ENCODE measurements at regions of chr13 and their contacts with region 1.

Region 1: DNA sequence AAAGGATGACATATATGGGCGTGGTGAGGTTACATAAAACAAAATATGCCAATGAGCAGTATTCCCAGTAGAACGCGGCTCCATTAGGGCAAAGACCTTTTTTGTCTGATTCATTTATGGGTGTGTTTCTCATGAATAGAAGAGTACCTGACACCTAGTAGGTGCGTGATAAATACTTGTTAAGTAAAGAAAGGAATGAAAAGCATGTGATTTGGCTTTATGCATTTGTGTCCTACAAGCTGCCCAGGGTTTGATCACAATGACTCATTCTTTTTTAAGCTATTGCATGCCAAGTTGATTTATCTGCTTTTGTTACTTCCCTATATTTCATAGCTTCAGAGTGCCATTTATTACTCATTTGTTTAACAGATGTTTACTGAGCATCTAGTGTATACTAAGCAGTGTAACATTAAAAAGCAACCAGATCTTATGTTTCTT is 19.1 kb upstream of the KCTD4 start:
- DNase-seq: peak; percentile 90
- H3K4me3 Mint-ChIP-seq: peak overlapping the region; percentile 28
- H3K27ac Mint-ChIP-seq: peak overlapping the region; percentile 81
- H3K4me1 Mint-ChIP-seq: peaks cover 48% of the 10 kb centered on the region
- H3K27me3 Mint-ChIP-seq: no peaks in the 10 kb centered on the region
- CTCF ChIP-seq: no peak

Region 2: DNA sequence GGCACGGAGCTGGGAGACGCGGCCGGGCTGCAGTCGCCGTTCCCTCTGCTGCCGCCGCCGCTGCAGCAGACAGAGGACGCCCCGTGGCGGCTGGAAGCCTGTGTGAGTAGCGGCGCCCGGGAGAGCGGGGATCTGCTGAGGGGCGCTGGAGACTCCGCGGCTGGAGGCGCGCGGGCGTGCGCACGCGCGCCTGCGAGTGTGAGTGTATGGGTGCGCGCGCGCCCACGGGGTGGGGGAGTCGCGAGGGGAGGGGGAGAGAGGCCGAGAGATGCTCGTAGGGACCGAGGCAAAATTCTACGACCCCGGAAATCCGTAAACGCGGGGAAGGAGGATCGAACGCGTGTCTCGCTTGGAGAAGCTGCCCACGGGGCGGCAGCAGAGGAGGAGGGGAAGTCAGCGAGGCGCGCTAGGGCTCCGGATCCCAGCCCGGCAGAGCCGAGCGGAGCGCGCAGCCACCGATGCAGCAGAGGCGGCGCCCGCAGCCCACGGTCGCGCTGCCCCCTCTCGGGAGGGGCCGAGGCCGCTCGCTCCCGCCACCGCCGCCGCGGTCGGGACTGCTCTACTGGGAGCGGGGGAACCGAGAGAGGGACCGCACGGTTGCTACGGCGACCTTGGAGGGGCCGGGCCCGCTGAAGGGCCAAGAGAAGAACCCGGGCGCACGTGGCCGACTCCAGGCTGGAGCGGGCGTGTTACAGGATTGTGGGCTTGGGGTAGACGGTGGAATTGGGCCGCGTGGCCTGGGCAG is 1433.0 kb before region 1 on chr13 and contains the start of gene ENOX1:
- CTCF ChIA-PET with region 1: no interaction called
- POLR2A ChIA-PET with region 1: no interaction called
- intact Hi-C with region 1: no loop called
- DNase-seq: peak; percentile 60
- H3K4me3 Mint-ChIP-seq: peak within 1 kb of the TSS; percentile 80
- H3K27ac Mint-ChIP-seq: peak within 1 kb of the TSS; percentile 23
- H3K4me1 Mint-ChIP-seq: peaks cover 20% of the 10 kb centered on the region
- H3K27me3 Mint-ChIP-seq: no peaks in the 10 kb centered on the region
- CTCF ChIP-seq: peak; percentile 12
- total RNA-seq, gene ENOX1: 1.5 and 1.8 TPM in 2 replicates

Region 3: DNA sequence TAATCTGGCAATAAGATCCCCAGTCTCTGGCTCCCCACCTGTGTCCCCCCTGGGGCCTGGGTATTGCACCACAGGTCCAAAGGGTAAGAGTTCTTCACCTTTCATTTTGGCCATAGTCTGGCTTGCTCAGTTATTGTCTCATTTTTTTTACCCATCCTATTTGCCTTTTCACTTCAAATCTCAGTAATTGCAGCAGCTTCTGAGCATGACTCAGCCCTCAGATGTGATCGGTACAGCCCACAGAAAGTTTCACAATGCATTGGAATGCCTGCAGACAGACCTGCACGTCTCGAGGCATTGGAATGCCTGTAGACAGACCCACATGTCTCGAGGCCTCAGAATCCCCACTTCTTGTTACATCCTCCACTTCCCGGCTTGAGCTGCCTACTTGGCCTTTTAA is 404.3 kb before region 1 on chr13:
- CTCF ChIA-PET with region 1: no interaction called
- POLR2A ChIA-PET with region 1: no interaction called
- intact Hi-C with region 1: no loop called
- DNase-seq: peak; percentile 93
- H3K4me3 Mint-ChIP-seq: no peak overlapping the region
- H3K27ac Mint-ChIP-seq: peak overlapping the region; percentile 37
- H3K4me1 Mint-ChIP-seq: peaks cover 45% of the 10 kb centered on the region
- H3K27me3 Mint-ChIP-seq: no peaks in the 10 kb centered on the region
- CTCF ChIP-seq: no peak

Region 4: DNA sequence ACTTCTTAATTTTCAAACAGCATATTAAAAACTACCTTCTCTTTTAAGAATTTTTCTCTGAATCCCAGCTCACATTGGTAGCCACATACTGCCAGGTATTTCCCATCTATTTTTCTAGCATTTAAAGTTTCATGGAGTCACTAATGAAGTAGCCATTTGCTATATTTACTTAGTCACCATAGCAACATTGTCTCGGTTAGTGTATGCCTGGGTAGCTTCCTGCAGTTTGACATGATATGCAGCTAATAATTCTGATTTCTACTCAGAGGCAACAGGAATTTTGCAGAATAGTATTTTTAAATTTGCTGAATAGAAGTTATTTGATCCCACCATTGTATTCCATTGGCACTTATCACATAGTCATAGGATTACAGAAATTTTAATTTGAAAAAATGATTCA is 11.8 kb after region 1 on chr13:
- CTCF ChIA-PET with region 1: no interaction called
- POLR2A ChIA-PET with region 1: interaction called, 73 read pairs
- intact Hi-C with region 1: no loop called
- DNase-seq: no peak
- H3K4me3 Mint-ChIP-seq: no peak overlapping the region
- H3K27ac Mint-ChIP-seq: no peak overlapping the region
- H3K4me1 Mint-ChIP-seq: peaks cover 20% of the 10 kb centered on the region
- H3K27me3 Mint-ChIP-seq: no peaks in the 10 kb centered on the region
- CTCF ChIP-seq: no peak

Region 5: GRCh38 chr13:45257638-45258338 is 37.8 kb after region 1 on chr13:
- CTCF ChIA-PET with region 1: no interaction called
- POLR2A ChIA-PET with region 1: interaction called, 26 read pairs
- intact Hi-C with region 1: loop called (anchors 1 kb)
- DNase-seq: no peak
- H3K4me3 Mint-ChIP-seq: no peak overlapping the region
- H3K27ac Mint-ChIP-seq: no peak overlapping the region
- H3K4me1 Mint-ChIP-seq: peaks cover 22% of the 10 kb centered on the region
- H3K27me3 Mint-ChIP-seq: no peaks in the 10 kb centered on the region
- CTCF ChIP-seq: no peak

Measured in MCF 10A (cell line).